Dorsolateral prefrontal cortex (tissue), 120 donors: ENCODE measurements at regions of chr18 and their contacts with region 1.

Region 1: GRCh38 chr18:10660179-10660884 is 134.5 kb downstream of the NAPG start:
- DNase-seq: no peak
- H3K4me3 ChIP-seq: peak overlapping the region in 4 of 59 donors; percentile 8 to 27 (median 20)
- H3K27ac ChIP-seq: no peak overlapping the region
- H3K27me3 ChIP-seq: peaks cover 0 to 10% (median 0%) of the 10 kb centered on the region in 45 donors
- CTCF ChIP-seq: no peak

Region 2: GRCh38 chr18:10318412-10318970 is 341.8 kb before region 1 on chr18:
- intact Hi-C with region 1: loop called in 1 of 2 experiments (anchors 10 kb)
- DNase-seq: no peak
- H3K4me3 ChIP-seq: no peak overlapping the region
- H3K27ac ChIP-seq: no peak overlapping the region
- H3K27me3 ChIP-seq: peaks cover 0 to 3% (median 0%) of the 10 kb centered on the region in 45 donors
- CTCF ChIP-seq: no peak